ENCODE measurements at regions of chr17 and their contacts with region 1.

Region 1: GRCh38 chr17:30906101-30906911 is at the start of gene TEFM:
- DNase-seq: peak; percentile 65 to 81
- ATAC-seq: peak; percentile 97 to 98
- H3K4me3 ChIP-seq: peak within 1 kb of the TSS; percentile 75 to 94 (median 90)
- H3K27ac ChIP-seq: peak within 1 kb of the TSS; percentile 85 to 93 (median 89)
- H3K4me1 ChIP-seq: peaks cover 15 to 16% of the 10 kb centered on the region in 2 donors
- H3K27me3 ChIP-seq: no peaks in the 10 kb centered on the region
- CTCF ChIP-seq: no peak
- POLR2A ChIP-seq: peak in 1 of 2 donors; percentile 23
- total RNA-seq, gene TEFM: 5.2 to 18.5 (median 8.3) TPM

Region 2: GRCh38 chr17:30831663-30832437 is 74.5 kb before region 1 on chr17 and contains the start of gene ATAD5:
- in situ Hi-C with region 1: no loop called
- intact Hi-C with region 1: loop called (anchors 5 kb)
- DNase-seq: peak; percentile 84 to 85
- ATAC-seq: peak; percentile 93 to 98
- H3K4me3 ChIP-seq: peak within 1 kb of the TSS; percentile 79 to 88 (median 82)
- H3K27ac ChIP-seq: peak within 1 kb of the TSS; percentile 62 to 73 (median 67)
- H3K4me1 ChIP-seq: peaks cover 14 to 15% of the 10 kb centered on the region in 2 donors
- H3K27me3 ChIP-seq: no peaks in the 10 kb centered on the region
- CTCF ChIP-seq: no peak
- POLR2A ChIP-seq: no peak
- total RNA-seq, gene ATAD5: 0.10 to 0.39 (median 0.20) TPM